Activated T-helper 2 cell treated with anti-CD3 and anti-CD28 coated beads, Interferon-gamma antibody, Interleukin-2, Interleukin-4, amounts not matched to agents 10 μg/mL and 5 μg/mL and 100 μg/mL, durations not matched to agents 14 hours and 24 hours and 36 hours (primary cell): ENCODE measurements at regions of chr17 and their contacts with region 1.

Region 1: DNA sequence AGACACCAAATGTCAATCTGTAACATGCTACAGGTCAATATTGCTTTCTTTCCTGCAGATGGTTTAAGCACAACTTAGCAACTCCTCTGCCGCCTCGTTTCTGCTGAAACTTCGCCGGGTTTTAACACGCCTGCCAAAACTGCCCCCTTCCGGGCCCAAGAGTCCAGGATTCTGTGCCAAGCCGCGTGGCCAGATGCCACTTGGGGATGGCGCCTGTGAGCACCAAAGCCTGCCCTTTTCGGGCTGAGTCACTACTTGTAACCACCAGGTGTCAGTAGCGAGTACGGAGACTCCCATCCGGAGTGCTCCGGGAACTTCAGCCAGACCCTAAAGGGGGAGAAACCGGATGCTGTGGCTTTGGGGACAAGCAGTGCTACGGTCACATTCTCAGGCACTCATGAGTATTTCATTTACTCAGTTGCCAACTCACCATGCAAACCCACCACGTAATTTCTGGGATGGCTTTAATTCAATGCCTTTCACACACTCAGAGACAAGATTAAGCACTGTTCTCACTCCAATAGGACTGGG is 7.8 kb downstream of the PMP22 start:
- DNase-seq: peak; percentile 48
- H3K4me3 Mint-ChIP-seq: no peak overlapping the region
- H3K27ac Mint-ChIP-seq: no peak overlapping the region
- H3K4me1 Mint-ChIP-seq: peaks cover 19% of the 10 kb centered on the region
- H3K27me3 Mint-ChIP-seq: peaks cover 50% of the 10 kb centered on the region

Region 2: DNA sequence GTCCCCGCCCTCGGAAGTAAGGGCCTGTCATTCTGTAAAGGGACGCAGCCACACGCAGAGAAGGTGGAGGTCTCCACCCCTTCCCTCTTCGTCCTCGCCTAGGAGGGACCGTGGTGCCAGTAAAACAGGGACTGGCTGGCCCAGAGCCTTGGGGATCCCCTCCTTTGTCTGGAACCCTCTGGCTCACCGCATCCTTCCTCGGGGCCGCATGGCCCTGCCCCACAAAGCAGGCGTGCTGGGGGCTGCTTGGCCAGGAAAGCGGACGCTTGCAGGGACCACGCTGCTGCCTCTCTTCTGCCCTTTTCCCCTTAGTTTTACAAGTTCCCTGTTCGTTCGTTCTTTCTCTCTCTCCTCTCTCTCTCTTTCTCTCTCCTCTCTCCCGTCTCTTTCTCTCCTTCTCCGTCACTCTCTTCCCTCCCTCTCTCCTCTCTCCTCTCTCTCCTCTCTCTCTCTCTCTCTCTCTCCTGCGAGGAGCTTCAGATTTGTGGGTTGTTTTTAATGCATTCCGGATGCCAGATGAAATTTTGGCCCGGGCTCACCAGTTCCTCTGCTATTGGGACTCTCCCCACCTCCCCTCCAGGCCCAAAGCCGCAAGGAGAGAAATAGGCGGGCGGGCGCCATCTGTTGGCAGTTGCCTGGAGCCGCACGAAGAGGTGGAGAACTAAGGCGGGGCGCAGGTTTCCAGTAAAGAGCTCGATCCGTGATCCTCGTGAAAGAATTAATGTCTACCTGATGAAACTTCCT is 245.2 kb after region 1 on chr17:
- intact Hi-C with region 1: loop called (anchors 1 kb)
- DNase-seq: peak; percentile 55
- H3K4me3 Mint-ChIP-seq: no peak overlapping the region
- H3K27ac Mint-ChIP-seq: no peak overlapping the region
- H3K4me1 Mint-ChIP-seq: peaks cover 6% of the 10 kb centered on the region
- H3K27me3 Mint-ChIP-seq: no peaks in the 10 kb centered on the region